Activated CD8-positive, alpha-beta memory T cell treated with anti-CD3 and anti-CD28 coated beads, Interleukin-2, amount 10 ng/mL, durations not matched to agents 7 days and 5 days (primary cell): ENCODE measurements at regions of chr1 and their contacts with region 1.

Region 1: GRCh38 chr1:205255941-205256780 is 28.4 kb downstream of the TMCC2 start:
- DNase-seq: peak; percentile 89
- ATAC-seq: peak; percentile 97
- H3K4me3 Mint-ChIP-seq: no peak overlapping the region
- H3K27ac Mint-ChIP-seq: no peak overlapping the region
- H3K4me1 Mint-ChIP-seq: peaks cover under 1% of the 10 kb centered on the region
- H3K27me3 Mint-ChIP-seq: peaks cover 2% of the 10 kb centered on the region

Region 2: DNA sequence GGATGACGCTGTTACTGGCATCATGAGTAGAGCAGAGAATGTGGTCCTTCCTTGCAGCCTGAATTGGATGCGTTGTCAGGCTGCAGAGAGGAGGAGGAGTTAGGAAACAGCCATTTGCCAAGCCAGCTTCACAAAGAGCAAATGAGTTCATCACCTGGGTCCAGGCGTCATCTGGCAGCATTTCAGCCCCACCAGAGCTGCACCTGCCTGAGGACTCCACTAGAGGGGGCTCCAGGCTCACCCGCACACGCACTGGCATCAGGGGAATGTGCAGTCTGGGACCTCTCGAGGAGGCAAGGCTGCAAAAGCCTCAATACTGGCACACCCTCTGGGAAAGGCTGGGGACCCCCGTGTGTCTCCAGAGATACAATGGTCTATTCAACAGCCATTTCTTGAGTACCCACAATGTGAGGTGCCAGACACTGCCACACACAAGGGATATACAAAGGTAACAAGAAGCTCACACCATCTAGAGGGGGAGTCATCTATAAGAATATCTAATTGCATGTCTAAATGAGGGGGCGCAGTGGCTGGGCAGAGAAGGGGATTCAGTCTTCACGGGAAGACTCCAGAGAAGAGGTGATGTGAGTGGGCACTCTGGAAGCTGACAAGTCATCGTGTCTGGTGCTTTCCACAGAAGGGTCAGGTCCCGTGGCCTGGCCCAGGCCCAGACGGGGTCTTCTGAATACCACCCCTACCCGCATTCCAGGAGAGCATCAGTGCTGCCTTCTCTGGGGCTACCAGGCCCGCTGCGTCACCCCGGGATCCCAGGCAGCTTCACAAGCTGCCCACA is 266.7 kb before region 1 on chr1:
- CTCF ChIA-PET with region 1: interaction called, 30 read pairs
- DNase-seq: peak; percentile 70
- ATAC-seq: peak; percentile 72
- H3K4me3 Mint-ChIP-seq: no peak overlapping the region
- H3K27ac Mint-ChIP-seq: no peak overlapping the region
- H3K4me1 Mint-ChIP-seq: peaks cover 12% of the 10 kb centered on the region
- H3K27me3 Mint-ChIP-seq: peaks cover 11% of the 10 kb centered on the region

Region 3: DNA sequence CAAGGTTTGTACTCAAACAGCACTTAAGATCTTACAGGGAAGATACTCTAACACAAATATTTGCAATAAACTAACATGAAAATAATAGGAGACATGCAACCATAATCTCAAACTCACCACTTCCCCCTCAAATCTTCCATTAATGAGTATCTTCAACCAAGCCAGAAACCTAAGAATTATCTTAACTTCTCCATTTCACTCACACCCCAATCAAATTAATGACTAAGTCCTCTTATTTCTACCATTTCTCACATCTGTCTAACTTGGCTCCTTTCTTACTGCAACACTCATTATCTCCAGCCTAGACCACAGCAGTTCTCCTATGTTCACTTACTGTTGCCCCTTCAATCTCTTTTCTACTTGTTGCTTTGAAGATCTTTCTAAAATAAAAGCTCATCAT is 144.8 kb before region 1 on chr1:
- CTCF ChIA-PET with region 1: interaction called, 10 read pairs
- DNase-seq: no peak
- ATAC-seq: no peak
- H3K4me3 Mint-ChIP-seq: no peak overlapping the region
- H3K27ac Mint-ChIP-seq: peak overlapping the region; percentile 9
- H3K4me1 Mint-ChIP-seq: peaks cover 18% of the 10 kb centered on the region
- H3K27me3 Mint-ChIP-seq: no peaks in the 10 kb centered on the region

Region 4: DNA sequence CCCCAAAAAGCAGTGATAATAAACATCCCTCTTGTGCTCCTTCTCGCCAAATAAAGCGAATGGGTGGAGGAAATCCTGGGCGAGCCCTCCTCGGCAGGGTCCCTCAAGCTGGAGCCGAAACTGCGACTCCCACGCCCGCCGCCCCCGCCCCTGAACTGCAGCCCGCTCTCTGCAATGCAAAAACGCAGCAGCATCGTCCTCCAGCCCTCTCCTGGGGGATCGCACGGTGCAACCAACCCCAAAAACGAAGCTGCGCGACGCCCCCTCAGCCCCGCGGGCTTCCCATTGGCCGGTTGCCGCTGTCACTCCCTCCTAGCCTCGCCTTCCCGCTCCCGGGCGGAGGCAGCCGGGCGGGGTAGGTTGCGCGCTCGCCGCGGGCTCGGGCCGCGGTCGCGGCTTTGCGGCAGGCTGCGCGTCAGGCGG is 28.6 kb before region 1 on chr1 and contains the start of gene TMCC2:
- CTCF ChIA-PET with region 1: interaction called, 207 read pairs
- DNase-seq: peak; percentile 90
- ATAC-seq: peak; percentile 95
- H3K4me3 Mint-ChIP-seq: peak within 1 kb of the TSS; percentile 91
- H3K27ac Mint-ChIP-seq: peak within 1 kb of the TSS; percentile 75
- H3K4me1 Mint-ChIP-seq: peaks cover 44% of the 10 kb centered on the region
- H3K27me3 Mint-ChIP-seq: peaks cover 48% of the 10 kb centered on the region
- total RNA-seq, gene TMCC2: 2.6 to 5.3 TPM

Region 5: GRCh38 chr1:205273551-205273982 is 17.4 kb after region 1 on chr1:
- CTCF ChIA-PET with region 1: interaction called, 53 read pairs
- DNase-seq: peak; percentile 88
- ATAC-seq: peak; percentile 88
- H3K4me3 Mint-ChIP-seq: no peak overlapping the region
- H3K27ac Mint-ChIP-seq: peak overlapping the region; percentile 40
- H3K4me1 Mint-ChIP-seq: peaks cover 10% of the 10 kb centered on the region
- H3K27me3 Mint-ChIP-seq: peaks cover 8% of the 10 kb centered on the region